Activated naive CD4-positive, alpha-beta T cell treated with anti-CD3 and anti-CD28 coated beads, Interleukin-2, amount 10 ng/mL, durations not matched to agents 7 days and 5 days (primary cell): ENCODE measurements at regions of chr19 and their contacts with region 1.

Region 1: DNA sequence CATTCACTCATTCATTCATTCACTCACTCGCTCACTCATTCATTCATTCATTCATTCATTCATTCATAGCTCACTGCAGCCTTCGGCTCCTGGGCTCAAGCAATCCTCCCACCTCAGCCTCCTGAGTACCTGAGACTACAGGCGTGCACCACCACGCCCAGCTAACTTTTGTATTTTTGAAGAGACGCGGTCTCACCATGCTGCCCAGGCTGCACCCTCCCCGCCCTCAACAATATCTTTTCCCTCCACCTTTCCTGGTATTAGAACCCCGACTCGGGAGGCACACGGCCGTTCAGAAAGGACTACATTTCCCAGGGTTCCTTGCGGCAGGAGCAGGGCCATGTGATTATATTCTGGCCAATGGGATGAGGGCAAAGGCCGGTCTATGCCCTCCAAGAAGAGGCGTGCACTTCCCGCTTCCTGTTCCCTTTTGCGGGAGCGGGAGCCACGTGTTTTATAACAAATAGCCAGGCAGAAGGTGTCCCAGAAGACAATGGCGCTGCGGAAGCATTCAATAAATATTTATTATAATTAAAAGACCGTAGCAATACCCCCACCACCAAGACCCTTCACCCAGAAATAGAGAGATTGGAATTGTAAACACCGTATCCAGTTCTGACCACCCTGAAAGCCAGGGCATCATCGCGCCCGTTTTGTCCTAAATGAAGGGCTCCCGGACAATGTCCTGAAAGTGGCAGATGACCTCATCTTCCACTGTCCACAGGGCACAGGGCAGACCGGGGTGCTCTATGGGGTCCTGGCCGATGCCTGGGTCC is 15.9 kb downstream of the TICAM1 start:
- DNase-seq: peak; percentile 85
- H3K4me3 Mint-ChIP-seq: peak overlapping the region; percentile 16
- H3K27ac Mint-ChIP-seq: peak overlapping the region; percentile 59
- H3K4me1 Mint-ChIP-seq: peaks cover 15% of the 10 kb centered on the region
- H3K27me3 Mint-ChIP-seq: peaks cover 5% of the 10 kb centered on the region

Region 2: GRCh38 chr19:4638828-4639530 is 176.6 kb before region 1 on chr19 and contains the start of gene TNFAIP8L1:
- CTCF ChIA-PET with region 1: no interaction called
- DNase-seq: peak; percentile 99
- H3K4me3 Mint-ChIP-seq: peak within 1 kb of the TSS; percentile 98
- H3K27ac Mint-ChIP-seq: peak within 1 kb of the TSS; percentile 97
- H3K4me1 Mint-ChIP-seq: peaks cover 51% of the 10 kb centered on the region
- H3K27me3 Mint-ChIP-seq: peaks cover 14% of the 10 kb centered on the region

Region 3: DNA sequence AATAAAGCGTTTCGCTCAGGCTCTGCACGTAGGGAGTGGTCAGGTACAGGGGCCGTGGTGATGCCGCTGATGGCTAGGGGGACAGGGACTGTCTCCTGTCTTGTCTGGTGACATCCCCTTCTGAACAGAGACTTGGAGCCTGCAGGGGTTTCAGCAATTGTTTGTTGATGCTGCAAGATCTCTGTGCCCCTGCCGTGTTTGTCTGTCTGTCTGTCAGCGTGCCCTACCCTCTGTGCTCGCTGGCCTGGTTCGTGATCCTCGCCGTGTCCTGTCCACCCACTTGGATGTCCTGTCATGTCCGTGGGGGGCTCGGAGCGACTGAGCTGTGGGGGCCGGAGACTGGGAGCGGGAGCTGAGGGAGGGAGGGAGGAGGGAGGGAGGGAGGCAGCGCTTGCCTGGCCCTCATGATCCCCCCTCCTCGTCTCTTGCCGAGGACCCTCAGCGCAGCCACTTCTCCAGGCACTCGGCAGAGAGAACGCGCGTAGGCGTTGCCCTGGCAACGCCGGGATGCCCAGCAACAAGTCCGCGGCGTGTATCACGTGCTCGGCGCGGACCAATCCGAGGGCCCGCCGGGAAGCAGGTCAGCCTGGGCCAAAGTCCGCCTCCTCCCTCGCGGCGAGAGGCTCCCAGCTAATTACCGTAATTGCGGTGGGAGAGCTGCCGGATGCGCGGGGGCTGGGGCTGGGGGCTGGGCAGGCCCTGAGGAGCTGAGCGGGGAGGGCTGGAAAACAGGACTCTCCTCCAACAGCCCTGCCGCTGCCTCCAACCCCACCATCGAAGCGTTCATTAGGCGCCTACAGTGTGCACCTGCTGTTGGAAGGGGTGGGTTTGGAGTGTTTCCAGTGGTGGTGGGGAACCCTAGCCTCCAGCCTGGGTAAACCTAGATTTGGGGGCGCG is 56.0 kb before region 1 on chr19:
- CTCF ChIA-PET with region 1: no interaction called
- DNase-seq: peak; percentile 72
- H3K4me3 Mint-ChIP-seq: no peak overlapping the region
- H3K27ac Mint-ChIP-seq: no peak overlapping the region
- H3K4me1 Mint-ChIP-seq: peaks cover 5% of the 10 kb centered on the region
- H3K27me3 Mint-ChIP-seq: peaks cover 61% of the 10 kb centered on the region

Region 4: DNA sequence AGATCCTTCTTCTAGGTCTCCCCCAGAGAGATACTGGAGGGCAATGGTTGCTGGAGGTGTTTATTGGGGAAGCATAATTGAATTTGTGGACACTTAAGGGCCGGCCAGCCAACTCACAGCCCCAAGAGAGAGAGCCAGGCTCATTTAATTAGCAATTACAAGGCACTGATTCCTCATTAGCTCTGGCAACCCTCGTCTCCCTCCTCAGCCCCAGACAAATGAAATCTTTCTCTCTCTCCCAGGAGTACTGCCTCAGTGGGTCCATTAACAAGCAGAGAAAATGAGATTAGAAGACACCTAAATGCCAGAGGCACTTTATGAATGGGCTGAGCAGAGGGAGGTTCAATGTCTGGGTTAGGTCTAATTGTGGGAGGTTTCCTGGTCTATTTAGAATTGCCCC is 43.0 kb before region 1 on chr19:
- CTCF ChIA-PET with region 1: no interaction called
- DNase-seq: no peak
- H3K4me3 Mint-ChIP-seq: no peak overlapping the region
- H3K27ac Mint-ChIP-seq: no peak overlapping the region
- H3K4me1 Mint-ChIP-seq: no peaks in the 10 kb centered on the region
- H3K27me3 Mint-ChIP-seq: peaks cover 19% of the 10 kb centered on the region

Region 5: DNA sequence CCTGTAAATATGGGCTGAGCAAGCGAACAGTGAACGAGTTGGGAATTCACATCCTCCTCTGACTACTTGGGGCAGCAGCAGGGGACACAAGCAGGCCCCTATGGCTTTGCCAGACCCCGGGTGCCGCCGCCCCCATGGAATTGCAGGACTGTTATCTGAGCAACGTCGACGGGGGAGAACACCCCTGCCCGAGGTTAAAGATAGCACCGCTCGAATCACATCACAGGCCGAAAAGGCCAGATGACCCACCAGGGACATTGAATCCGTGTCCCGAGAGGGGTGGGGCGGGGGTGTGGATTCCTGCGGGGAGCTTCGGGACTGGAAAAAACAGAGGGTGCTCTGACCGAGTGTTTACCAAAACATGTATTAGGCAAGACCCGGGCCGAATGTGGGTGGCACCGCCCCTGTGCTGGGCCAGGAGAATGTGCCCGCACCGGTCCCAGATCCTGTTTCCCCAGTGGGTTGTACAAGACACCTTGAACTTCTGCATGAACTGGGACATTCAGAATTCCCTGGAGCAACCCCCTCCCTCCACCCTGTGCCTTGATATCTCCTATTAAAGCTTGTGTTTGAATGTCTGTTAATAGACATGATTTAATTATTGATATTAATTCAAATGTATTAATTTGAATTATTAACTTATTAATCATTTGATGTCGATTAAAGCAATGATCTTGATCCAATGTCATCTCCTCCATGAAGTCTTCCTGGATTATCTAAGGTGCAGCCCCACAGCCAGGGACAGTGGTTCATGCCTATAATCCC is 14.8 kb before region 1 on chr19:
- CTCF ChIA-PET with region 1: interaction called, 10 read pairs
- DNase-seq: no peak
- H3K4me3 Mint-ChIP-seq: no peak overlapping the region
- H3K27ac Mint-ChIP-seq: no peak overlapping the region
- H3K4me1 Mint-ChIP-seq: peaks cover 8% of the 10 kb centered on the region
- H3K27me3 Mint-ChIP-seq: no peaks in the 10 kb centered on the region

Region 6: GRCh38 chr19:4831304-4831978 is 15.8 kb after region 1 on chr19 and contains the start of gene TICAM1:
- CTCF ChIA-PET with region 1: interaction called, 21 read pairs
- DNase-seq: peak; percentile 84
- H3K4me3 Mint-ChIP-seq: peak within 1 kb of the TSS; percentile 91
- H3K27ac Mint-ChIP-seq: peak within 1 kb of the TSS; percentile 90
- H3K4me1 Mint-ChIP-seq: peaks cover 35% of the 10 kb centered on the region
- H3K27me3 Mint-ChIP-seq: peaks cover 4% of the 10 kb centered on the region

Region 7: DNA sequence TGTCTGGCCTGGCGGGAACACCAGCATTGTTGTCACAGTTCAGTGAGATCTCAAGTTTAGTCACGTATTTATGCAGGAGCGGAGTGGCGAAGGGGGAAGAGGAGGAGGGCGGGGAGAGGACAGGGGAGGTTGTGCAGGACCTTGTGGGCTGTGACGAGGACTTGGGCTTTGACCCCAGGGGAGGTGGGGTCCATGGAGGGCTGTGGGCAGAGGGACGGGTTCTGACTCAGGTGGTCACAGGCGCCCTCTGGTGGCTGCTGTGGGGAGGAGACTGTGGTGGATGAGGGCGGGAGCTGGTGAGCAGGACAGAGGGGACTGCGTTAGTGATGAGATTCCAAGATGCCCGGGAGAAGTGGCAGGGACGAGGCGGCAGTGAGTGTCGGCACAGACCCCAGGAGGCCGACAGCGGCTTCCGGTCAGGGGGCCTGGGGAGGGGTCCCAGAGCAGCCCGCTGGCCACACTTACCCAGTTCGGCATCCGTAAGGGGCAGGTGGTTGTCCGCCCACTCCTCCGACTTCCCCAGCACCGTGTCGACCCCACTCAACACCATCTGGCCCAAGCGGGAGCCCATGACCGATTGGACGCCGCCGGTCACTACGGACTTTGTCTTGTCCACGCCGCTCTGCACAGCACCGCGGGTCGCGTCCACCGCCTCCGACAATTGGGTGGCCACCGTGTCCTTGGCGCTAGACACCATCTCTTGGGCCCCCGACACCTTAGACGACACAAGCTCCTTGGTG is 36.1 kb after region 1 on chr19:
- CTCF ChIA-PET with region 1: interaction called, 141 read pairs
- DNase-seq: peak; percentile 80
- H3K4me3 Mint-ChIP-seq: no peak overlapping the region
- H3K27ac Mint-ChIP-seq: no peak overlapping the region
- H3K4me1 Mint-ChIP-seq: no peaks in the 10 kb centered on the region
- H3K27me3 Mint-ChIP-seq: no peaks in the 10 kb centered on the region

Region 8: DNA sequence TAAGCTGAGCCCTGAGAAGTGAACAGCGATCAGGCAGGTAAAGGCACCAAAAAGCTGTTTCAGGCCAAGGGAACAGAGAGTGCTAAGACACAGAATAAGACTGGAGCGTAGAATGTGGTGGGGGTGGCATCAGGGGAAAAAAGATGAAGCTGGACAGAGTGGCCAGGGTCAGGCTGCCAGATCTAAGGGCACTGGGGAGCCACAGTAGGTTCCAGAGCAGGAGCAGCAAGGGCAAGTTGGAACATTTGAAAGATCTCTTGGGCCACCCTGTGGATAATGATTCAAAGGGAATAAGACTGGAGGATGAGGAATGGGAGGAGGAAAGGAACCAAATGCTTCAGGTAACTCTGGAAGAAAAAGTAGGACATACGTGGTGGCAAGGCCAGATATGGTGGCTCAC is 58.3 kb after region 1 on chr19:
- CTCF ChIA-PET with region 1: interaction called, 14 read pairs
- DNase-seq: no peak
- H3K4me3 Mint-ChIP-seq: no peak overlapping the region
- H3K27ac Mint-ChIP-seq: no peak overlapping the region
- H3K4me1 Mint-ChIP-seq: peaks cover 18% of the 10 kb centered on the region
- H3K27me3 Mint-ChIP-seq: peaks cover 54% of the 10 kb centered on the region

Region 9: GRCh38 chr19:4909897-4910593 is 94.4 kb after region 1 on chr19:
- CTCF ChIA-PET with region 1: interaction called, 76 read pairs
- DNase-seq: peak; percentile 97
- H3K4me3 Mint-ChIP-seq: peak overlapping the region; percentile 85
- H3K27ac Mint-ChIP-seq: peak overlapping the region; percentile 98
- H3K4me1 Mint-ChIP-seq: peaks cover 52% of the 10 kb centered on the region
- H3K27me3 Mint-ChIP-seq: peaks cover 5% of the 10 kb centered on the region

Region 10: DNA sequence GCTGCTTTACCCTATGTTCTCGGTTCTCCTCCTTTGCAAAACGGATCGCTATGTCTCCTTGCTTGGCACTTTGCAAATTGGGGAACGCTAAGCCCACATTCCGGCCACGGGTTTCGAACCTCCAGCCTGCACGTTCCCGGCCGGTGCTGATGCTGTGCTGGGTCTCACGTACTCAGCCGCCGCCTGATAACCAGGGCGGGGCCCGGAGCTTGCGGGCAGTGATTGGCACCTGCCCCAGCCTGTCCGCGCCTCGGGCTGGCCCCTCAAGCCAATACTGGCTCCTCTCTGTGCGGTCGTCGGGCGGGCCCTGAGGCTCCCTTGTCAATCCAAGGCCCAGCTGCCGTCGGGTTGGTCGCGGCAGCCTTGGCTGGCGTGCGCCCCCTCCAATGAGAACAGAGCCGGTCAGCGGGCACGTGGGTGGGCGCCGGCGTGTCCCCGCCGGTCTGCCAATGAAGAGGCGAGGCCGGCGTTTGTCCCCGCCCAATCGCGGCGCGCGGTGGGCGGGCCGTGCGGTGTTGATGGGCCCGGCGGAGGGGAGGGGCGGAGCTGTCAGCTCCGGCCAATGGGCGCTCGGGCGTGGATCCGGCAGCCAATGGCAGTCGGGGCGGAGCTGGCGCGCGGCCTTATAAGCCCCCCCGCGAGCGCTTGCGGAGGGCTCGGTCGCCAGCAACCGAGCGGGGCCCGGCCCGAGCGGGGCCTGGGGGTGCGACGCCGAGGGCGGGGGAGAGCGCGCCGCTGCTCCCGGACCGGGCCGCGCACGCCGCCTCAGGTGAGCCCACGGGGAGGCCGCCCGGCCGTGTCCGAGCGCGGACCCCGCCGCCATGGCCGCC is 153.1 kb after region 1 on chr19 and contains the start of gene KDM4B:
- CTCF ChIA-PET with region 1: no interaction called
- DNase-seq: peak; percentile 99
- H3K4me3 Mint-ChIP-seq: peak within 1 kb of the TSS; percentile 82
- H3K27ac Mint-ChIP-seq: peak within 1 kb of the TSS; percentile 94
- H3K4me1 Mint-ChIP-seq: peaks cover 38% of the 10 kb centered on the region
- H3K27me3 Mint-ChIP-seq: no peaks in the 10 kb centered on the region

Region 11: DNA sequence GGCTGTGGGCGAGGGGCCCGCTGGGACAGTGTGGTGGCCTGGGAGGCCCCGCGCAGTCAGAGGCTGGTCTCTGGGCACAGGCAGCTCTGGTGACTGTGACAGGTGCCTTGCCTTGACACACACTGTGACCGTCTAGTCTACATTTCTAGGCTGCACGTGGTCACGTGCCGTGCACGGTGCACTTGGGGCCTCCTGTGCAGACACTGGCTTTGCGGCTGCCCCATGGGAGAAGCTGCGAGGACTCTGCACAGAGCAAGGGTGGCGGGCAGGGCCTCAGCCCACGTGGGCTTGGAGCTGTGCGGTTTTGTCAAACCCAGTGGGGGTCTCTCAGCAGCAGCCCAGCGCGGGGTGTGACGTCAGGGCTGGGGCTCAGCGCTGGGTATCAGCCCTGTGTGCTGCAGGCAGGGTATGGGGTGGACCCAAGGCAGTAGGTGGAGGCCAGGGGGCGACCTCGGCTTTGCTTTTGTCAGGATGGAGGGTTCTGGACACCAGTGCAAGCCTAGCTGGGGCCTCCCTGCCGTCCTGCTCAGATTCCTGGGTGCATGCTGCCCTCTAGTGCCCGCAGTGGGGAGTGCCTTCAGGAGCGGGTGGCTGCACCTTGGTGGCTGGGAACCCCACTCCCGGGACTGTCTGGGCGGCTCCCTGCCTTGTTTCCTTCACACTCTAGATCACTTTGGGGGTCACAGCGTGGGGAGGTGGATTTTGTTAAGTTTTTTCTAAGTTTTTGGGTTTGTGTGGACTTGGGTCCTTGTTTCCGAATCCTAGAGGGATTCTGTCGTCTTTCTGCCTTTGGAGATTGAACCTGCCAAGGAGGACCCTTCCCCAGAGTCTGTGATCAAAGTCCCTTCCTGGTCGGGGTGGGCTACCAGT is 215.9 kb after region 1 on chr19:
- CTCF ChIA-PET with region 1: interaction called, 50 read pairs
- DNase-seq: peak; percentile 85
- H3K4me3 Mint-ChIP-seq: no peak overlapping the region
- H3K27ac Mint-ChIP-seq: no peak overlapping the region
- H3K4me1 Mint-ChIP-seq: no peaks in the 10 kb centered on the region
- H3K27me3 Mint-ChIP-seq: no peaks in the 10 kb centered on the region